ENCODE measurements at regions of chr3 and their contacts with region 1.

Region 1: GRCh38 chr3:114760679-114761078 is 386.4 kb downstream of the ZBTB20 start:
- DNase-seq: no peak
- ATAC-seq: no peak
- H3K4me3 ChIP-seq: no peak overlapping the region
- H3K27ac ChIP-seq: no peak overlapping the region
- H3K4me1 ChIP-seq: peaks cover 28% of the 10 kb centered on the region
- H3K27me3 ChIP-seq: no peaks in the 10 kb centered on the region
- CTCF ChIP-seq: no peak
- EP300 ChIP-seq: no peak
- POLR2A ChIP-seq: no peak
- RAD21 ChIP-seq: no peak

Region 2: DNA sequence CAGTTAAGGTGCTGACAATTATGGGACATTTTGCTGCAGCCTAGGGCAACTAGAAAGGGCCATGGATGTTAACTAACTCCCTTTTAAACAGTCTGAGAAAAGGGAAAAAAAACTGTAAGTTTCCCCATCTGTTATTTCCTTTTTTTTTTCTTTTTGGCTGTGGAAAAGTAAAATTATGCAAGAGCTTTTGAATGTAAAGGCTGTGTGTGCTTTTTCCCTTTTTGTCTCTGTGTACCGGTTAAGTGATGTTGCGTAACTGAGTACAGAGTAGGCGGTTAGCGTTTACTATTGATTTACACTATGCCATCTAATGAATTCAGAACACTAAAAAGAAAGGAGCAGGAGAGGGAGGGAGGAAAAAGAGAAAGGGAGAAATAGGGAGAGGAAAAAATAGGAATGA is 63.3 kb before region 1 on chr3:
- CTCF ChIA-PET with region 1: no interaction called
- POLR2A ChIA-PET with region 1: no interaction called
- in situ Hi-C with region 1: no loop called
- intact Hi-C with region 1: no loop called
- DNase-seq: peak; percentile 30
- ATAC-seq: no peak
- H3K4me3 ChIP-seq: no peak overlapping the region
- H3K27ac ChIP-seq: no peak overlapping the region
- H3K4me1 ChIP-seq: peaks cover 10% of the 10 kb centered on the region
- H3K27me3 ChIP-seq: no peaks in the 10 kb centered on the region
- CTCF ChIP-seq: no peak
- EP300 ChIP-seq: peak in 1 of 2 experiments; percentile 36; a peak in 1 of 4 replicates
- POLR2A ChIP-seq: no peak
- RAD21 ChIP-seq: no peak

Region 3: DNA sequence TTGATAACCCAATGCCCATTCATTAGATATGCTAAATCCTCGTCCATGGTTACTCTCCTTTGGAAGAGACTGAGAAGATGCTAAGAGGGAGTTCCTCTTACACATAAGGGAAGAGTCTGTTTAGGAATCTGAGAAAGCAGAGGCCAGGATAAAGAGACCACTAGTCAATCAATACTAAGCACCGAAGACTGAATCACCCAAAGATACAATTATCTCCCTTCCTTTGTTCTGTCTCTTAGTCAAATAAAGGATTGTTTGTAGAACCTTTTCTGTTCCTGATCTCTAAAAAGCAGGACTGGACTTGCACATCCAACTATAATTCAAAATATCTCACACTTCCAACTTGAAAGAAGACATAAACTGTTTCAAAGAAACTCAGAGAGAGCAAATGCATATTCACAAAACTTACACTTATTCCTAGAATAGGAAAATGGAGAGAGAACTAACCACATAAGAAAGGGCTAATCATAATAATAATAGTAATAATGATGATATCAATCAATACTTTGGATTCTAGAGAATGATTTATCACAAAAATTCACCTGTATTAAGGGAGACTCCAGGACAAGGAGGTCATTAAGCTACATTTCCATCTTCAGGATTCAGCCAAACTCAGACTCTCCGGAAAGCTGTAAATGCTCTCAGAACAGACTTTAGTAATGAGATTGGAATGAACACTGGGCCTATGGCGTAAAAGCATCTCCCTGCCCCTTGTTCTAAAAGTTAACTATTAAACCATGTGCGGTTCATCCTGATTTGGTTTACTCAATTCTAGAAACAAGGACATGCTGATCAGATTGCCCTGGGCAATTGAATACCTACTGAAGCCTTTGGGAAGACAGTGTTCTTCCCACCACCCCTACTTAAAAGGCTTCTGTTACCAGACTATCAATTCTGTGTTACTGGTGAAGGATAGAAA is 15.1 kb before region 1 on chr3:
- CTCF ChIA-PET with region 1: no interaction called
- POLR2A ChIA-PET with region 1: no interaction called
- in situ Hi-C with region 1: no loop called
- intact Hi-C with region 1: loop called (anchors 2 kb)
- DNase-seq: peak; percentile 91
- ATAC-seq: peak; percentile 100
- H3K4me3 ChIP-seq: peak overlapping the region; percentile 39 to 55 (median 46); a peak in 5 of 6 replicates
- H3K27ac ChIP-seq: peak overlapping the region; percentile 54
- H3K4me1 ChIP-seq: peaks cover 46% of the 10 kb centered on the region
- H3K27me3 ChIP-seq: no peaks in the 10 kb centered on the region
- CTCF ChIP-seq: no peak
- EP300 ChIP-seq: peak in 1 of 2 experiments; percentile 56; a peak in 1 of 4 replicates
- POLR2A ChIP-seq: no peak
- RAD21 ChIP-seq: no peak

Measured in HepG2 (cell line).